ENCODE measurements at regions of chrX and their contacts with region 1.

Region 1: DNA sequence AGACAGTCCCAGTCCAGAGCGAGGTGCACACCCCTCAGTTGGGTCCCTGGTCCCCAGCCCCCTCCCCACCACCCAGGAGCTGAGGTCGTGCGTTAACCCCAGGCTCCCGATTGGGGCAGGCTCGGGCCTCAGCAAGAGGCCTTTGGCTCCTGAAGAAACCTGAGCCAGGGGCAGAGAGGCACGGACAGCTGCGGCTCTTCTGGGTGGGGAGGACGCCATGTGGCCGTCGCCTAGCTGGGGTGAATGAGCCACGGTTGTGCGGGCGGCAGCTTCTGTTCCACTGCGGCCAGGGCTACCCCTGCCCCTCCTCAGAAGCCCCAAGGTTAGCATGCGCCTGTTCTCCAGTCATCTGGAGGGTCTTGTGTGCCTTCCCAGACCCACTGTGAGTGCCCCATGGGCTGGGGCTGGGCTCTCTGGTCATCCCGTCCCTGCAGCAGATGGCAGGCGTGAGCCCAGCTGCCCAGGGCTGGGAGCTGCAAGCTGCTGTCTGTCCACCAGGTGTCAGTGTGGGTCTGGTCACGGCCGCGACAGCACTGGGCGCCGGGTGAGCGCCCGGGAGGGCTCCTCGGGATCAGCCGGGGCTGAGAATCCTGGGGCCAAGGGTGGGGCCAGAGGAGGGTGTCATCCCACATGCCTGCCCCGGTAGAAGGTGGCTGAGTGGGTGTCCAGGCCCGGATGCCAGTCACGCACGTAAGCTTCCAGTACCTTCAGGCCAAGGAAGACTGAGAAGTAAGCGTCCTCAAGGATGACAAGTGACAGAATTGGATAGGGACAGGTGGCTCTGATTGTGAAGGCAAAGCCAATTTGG is 21.9 kb downstream of the ATP2B3 start:
- DNase-seq: peak; percentile 35
- H3K27ac ChIP-seq: no peak overlapping the region
- CTCF ChIP-seq: peak; percentile 68

Region 2: DNA sequence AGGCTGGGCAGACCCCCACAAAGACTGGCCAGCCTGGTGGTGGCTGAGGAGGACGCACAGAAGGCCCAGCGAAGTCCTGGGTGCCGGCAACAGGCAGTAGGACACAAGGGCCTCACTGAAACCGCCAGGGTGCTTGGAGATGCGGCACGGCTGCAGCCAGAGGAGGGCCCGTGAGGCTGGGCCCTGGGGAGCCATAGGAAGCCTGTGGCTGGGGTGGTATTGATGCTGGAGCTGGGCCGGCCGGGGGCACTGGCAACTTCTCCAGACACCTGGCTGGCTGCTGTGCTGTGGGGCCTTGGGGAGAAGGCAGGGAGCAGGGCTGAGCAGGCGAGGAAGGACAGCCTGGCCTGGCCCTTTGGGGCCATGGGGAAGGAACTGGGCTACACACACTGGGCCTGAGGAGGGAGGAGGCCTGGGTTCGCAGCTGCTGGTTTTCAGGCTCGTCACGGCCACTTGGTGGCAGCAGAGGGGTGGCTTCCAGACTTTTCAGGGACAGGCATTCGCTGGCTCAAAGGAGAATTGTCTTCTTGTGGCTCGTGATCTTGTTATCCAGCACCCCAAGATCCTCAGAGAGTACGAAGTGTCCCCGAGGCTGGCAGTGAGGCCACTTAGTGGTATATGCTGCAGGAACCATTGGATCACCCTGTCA is 15.3 kb after region 1 on chrX:
- CTCF ChIA-PET with region 1: interaction called, 13 read pairs
- POLR2A ChIA-PET with region 1: no interaction called
- DNase-seq: peak; percentile 38
- H3K27ac ChIP-seq: no peak overlapping the region
- CTCF ChIP-seq: peak; percentile 67

Region 3: GRCh38 chrX:153667956-153668396 is 128.6 kb after region 1 on chrX:
- CTCF ChIA-PET with region 1: interaction called, 15 read pairs
- POLR2A ChIA-PET with region 1: no interaction called
- DNase-seq: peak; percentile 62
- H3K27ac ChIP-seq: no peak overlapping the region
- CTCF ChIP-seq: peak; percentile 62